ENCODE measurements at regions of chr7 and their contacts with region 1.

Region 1: DNA sequence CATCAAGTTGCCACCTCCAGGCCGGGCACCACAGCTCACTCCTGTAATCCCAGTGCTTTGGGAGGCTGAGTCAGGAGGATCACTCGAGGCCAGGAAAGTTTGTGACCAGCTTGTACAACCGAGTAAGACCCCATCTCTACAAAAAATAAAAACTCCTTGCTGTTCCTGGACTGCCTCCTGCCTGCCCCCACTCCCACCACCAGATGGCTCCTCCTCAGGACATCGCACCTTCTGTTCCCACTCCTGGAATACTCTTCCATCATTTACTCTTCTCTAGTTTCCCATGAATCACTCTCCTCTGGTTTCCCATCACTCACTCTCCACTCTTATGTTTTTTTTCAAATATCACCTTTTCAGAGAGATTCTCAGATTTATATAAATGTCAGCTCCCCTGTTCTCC is 540.7 kb downstream of the CALN1 start:
- DNase-seq: no peak
- H3K4me3 ChIP-seq: no peak overlapping the region
- H3K27ac ChIP-seq: peak overlapping the region in 1 of 2 experiments; percentile 57
- H3K4me1 ChIP-seq: peaks cover 0 to 19% (median 12%) of the 10 kb centered on the region in 4 experiments
- H3K27me3 ChIP-seq: no peaks in the 10 kb centered on the region

Region 2: GRCh38 chr7:71615017-71615416 is 256.4 kb before region 1 on chr7:
- CTCF ChIA-PET with region 1: no interaction called
- POLR2A ChIA-PET with region 1: no interaction called
- DNase-seq: no peak
- H3K4me3 ChIP-seq: no peak overlapping the region
- H3K27ac ChIP-seq: no peak overlapping the region
- H3K4me1 ChIP-seq: no peaks in the 10 kb centered on the region
- H3K27me3 ChIP-seq: peaks cover 0 to 7% (median 3%) of the 10 kb centered on the region in 5 experiments

Region 3: DNA sequence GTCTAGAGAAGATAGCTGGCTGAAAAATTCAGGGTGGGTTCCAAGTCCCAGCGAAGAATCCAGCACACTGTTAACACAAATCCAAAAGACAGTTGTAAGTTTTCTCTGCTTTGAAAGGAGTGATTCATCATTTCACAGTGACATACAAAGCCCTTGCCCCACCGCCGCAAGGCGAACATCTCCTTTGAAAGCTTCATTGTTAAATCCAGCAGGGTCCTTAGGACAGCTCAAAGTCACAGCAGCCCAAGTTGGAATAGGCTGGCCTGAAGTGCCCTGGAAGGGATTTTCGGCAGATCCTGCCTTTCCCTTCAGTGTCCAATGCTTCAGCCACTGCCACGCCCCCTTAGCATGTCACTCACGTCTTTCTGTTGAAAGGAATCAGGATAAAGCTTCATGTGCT is 14.6 kb after region 1 on chr7:
- CTCF ChIA-PET with region 1: interaction called, 17 read pairs
- POLR2A ChIA-PET with region 1: no interaction called
- DNase-seq: peak in 2 of 3 donors; percentile 55 to 72
- H3K4me3 ChIP-seq: peak overlapping the region in 3 of 7 experiments; percentile 21 to 35 (median 26)
- H3K27ac ChIP-seq: peak overlapping the region in 1 of 2 experiments; percentile 22
- H3K4me1 ChIP-seq: peaks cover 2 to 12% (median 10%) of the 10 kb centered on the region in 4 experiments
- H3K27me3 ChIP-seq: no peaks in the 10 kb centered on the region